WTC11 (cell line): ENCODE measurements at regions of chr2 and their contacts with region 1.

Region 1: DNA sequence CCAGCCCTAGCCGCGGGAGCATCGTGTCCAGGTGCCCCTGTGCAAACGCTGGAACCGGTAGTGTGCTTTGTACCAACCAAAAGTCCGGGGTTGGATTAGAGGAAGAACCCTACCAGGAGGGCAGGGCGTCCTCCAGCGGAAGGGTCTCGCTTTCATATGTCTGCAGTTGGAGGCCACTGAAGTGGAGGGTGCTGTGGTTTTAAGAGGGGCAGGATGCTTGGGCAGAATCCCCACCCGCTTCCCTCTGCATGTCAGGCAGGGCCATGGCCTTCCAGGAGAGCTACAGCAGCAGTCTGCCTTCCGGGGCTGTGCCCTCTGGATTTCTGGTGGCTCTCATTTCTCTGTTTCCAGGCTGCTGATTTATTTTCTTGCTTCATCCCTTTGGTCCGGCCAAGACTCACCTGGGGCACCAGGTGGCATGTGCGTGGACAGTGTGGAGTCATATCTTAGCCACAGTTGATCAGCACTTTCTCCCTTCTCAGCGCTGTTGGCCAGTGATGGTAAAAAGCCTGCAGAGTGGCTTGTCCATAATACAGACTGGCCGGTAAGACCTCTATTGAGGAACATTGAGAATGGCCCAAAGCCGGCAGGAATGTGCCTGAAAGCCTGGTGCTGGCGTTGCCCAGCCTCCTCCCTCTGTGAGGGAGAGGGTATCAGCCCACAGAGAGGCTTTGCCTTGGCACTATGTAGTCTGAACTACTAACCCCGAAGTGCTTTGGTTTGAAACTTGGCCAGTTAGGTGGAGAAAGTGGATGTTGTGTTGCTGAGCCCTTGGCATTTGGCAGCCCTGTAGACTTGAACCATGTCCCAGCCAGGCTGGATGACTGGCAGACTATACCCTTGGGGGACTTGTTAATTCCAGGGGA is 1.8 kb downstream of the AGAP1 start:
- DNase-seq: no peak
- ATAC-seq: no peak
- H3K4me3 Mint-ChIP-seq: peak overlapping the region; percentile 73
- H3K27ac Mint-ChIP-seq: no peak overlapping the region
- H3K4me1 Mint-ChIP-seq: peaks cover 59% of the 10 kb centered on the region
- H3K27me3 Mint-ChIP-seq: peaks cover 31% of the 10 kb centered on the region
- CTCF ChIP-seq: no peak

Region 2: DNA sequence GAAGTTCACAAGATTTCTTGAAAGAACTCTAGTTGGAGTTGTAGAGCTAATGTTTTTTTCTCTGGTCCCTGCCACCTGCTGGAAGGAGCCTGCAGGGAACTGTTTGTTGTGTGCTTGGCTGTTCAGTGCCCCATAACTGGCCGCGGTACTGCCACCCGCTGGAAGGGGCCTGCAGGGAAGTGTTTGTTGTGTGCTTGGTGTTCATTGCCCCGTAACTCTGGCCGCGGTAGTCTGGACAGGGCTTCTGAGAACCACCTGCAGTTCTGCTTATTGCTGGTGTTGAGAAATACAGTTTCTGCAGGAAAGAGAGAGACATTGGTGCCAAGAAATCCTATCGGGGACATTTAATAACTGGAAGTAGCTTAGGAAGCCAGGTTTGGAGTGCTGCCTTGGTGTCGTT is 56.4 kb after region 1 on chr2:
- CTCF ChIA-PET with region 1: interaction called, 23 read pairs
- POLR2A ChIA-PET with region 1: no interaction called
- DNase-seq: peak; percentile 66
- ATAC-seq: peak; percentile 88
- H3K4me3 Mint-ChIP-seq: no peak overlapping the region
- H3K27ac Mint-ChIP-seq: peak overlapping the region; percentile 87
- H3K4me1 Mint-ChIP-seq: peaks cover 52% of the 10 kb centered on the region
- H3K27me3 Mint-ChIP-seq: no peaks in the 10 kb centered on the region
- CTCF ChIP-seq: no peak